Activated CD8-positive, alpha-beta T cell treated with anti-CD3 and anti-CD28 coated beads, Interleukin-2, amount 10 ng/mL, durations not matched to agents 7 days and 5 days (primary cell): ENCODE measurements at regions of chr6 and their contacts with region 1.

Region 1: DNA sequence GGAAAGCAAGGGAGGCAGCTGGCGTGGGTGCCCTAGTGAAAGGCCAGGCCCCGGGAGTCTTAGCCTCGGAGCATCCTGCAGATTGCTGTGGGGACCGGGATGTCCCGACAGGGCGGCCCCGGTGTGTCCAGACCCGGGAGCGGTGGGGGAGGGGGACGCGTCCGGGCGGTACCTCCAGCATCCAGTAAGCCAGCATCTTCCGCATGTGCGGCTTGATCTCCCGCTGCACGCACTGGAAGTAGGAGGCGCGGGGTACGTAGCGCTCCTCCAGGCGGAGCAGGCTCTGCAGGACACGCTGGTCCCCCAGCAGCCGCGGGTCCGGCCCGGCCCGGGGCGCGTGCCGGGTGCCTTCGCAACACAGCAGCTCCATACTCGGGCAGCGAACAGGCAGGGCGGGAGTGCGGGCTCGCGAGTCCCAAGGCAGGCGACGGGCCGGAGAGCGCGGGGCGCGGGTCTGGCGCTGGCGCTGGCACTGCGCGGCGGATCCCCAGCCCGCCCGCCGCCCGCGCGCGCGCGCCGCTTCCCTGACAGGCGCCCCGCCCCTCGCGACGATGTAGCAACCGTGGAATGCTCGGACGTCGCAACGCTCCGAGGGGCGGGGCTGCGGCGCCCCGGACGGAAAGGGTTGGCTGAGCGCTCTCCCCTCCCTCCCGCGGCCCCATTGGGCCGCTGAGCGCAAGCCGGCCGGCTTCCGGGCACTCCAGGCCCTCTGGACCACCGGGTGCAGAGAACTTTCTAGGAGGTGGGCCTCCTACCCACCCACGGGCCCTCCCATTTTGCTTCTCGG is at the start of gene CCND3:
- DNase-seq: peak; percentile 93
- ATAC-seq: peak; percentile 80
- H3K4me3 Mint-ChIP-seq: peak within 1 kb of the TSS; percentile 99
- H3K27ac Mint-ChIP-seq: peak within 1 kb of the TSS; percentile 97
- H3K4me1 Mint-ChIP-seq: peaks cover 58% of the 10 kb centered on the region
- H3K27me3 Mint-ChIP-seq: no peaks in the 10 kb centered on the region
- total RNA-seq, gene CCND3: 441 to 462 TPM

Region 2: DNA sequence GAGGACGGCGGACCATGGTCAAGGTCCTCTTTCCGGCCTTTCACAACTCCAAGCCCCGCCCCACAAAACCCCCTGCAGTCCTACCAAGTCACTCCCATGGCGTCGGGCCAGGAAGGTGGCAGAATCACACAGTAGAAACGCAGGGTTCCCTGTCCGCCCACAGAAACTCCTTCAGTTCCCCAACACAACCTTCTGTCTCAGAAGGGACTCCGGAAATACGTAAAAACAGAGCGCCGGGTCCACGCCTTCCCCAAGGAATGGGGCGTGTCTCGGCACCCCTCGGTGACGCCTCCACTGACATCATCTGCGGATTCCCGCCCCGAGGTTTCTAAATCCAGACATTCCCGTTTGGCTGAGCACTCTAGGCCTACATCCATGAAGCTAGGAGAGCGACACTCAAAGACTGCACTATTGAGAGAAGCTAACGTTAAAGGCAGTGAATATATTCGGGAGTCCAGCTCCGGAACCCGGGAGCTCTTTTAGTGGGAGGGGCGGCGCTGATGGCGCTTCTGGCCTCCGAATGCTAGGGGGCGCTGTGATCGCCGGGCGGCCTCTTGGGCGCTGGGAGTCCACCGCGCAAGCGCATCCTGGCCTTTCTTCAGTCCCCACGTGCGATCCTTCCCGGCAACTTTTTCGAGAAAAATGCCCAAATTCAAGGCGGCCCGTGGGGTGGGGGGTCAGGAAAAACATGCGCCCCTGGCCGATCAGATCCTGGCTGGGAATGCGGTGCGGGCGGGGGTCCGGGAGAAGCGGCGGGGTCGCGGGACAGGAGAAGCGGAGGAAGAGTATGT is 20.4 kb before region 1 on chr6 and contains the starts of genes BYSL and MED20:
- CTCF ChIA-PET with region 1: interaction called, 193 read pairs
- POLR2A ChIA-PET with region 1: interaction called, 99 read pairs
- DNase-seq: peak; percentile 95
- ATAC-seq: peak; percentile 90
- H3K4me3 Mint-ChIP-seq: peak within 1 kb of the TSS; percentile 98
- H3K27ac Mint-ChIP-seq: peak within 1 kb of the TSS; percentile 98
- H3K4me1 Mint-ChIP-seq: peaks cover 52% of the 10 kb centered on the region
- H3K27me3 Mint-ChIP-seq: no peaks in the 10 kb centered on the region
- total RNA-seq, gene BYSL: 39.4 to 43.1 TPM
- total RNA-seq, gene MED20: 20.6 to 22.3 TPM

Region 3: GRCh38 chr6:41929924-41930323 is 11.5 kb before region 1 on chr6:
- CTCF ChIA-PET with region 1: interaction called, 193 read pairs
- POLR2A ChIA-PET with region 1: interaction called, 99 read pairs
- DNase-seq: no peak
- ATAC-seq: no peak
- H3K4me3 Mint-ChIP-seq: no peak overlapping the region
- H3K27ac Mint-ChIP-seq: peak overlapping the region; percentile 60
- H3K4me1 Mint-ChIP-seq: peaks cover 40% of the 10 kb centered on the region
- H3K27me3 Mint-ChIP-seq: no peaks in the 10 kb centered on the region

Region 4: GRCh38 chr6:41967312-41968287 is 26.1 kb after region 1 on chr6:
- CTCF ChIA-PET with region 1: interaction called, 10 read pairs
- POLR2A ChIA-PET with region 1: interaction called, 8 read pairs
- DNase-seq: no peak
- ATAC-seq: no peak
- H3K4me3 Mint-ChIP-seq: no peak overlapping the region
- H3K27ac Mint-ChIP-seq: peak overlapping the region; percentile 8
- H3K4me1 Mint-ChIP-seq: peaks cover 56% of the 10 kb centered on the region
- H3K27me3 Mint-ChIP-seq: no peaks in the 10 kb centered on the region

Region 5: DNA sequence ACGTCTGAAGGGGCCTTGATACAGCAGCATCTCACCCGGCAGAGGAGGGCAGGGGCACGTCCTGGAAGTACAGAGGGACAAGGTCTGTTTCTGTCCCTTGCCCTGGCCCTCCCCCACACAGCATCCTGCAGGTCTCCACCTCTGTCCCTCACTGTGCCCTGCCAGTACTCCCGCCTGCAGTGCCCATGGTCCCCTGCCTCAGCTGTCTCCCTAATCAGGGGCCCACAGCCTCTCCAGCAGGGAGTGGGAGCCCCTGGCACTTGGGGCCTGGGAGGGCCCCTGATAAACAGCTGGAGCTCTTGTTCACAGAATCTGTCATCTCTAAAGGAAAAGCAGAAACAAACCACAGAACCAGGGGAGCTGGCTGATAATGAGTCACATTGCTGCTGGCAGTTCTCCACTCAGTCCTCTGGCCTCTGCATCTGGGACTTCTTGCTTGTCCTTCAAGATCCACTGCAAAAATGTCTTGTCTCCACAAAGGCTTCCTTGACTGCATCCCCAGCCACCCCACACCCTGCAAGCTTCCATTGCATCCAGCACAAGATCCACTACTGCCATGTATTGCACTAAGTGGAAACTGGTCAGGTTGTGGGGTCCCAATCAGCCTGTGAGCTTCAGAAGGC is 75.7 kb after region 1 on chr6:
- CTCF ChIA-PET with region 1: interaction called, 7 read pairs
- POLR2A ChIA-PET with region 1: interaction called, 17 read pairs
- DNase-seq: peak; percentile 62
- ATAC-seq: peak; percentile 73
- H3K4me3 Mint-ChIP-seq: peak overlapping the region; percentile 50
- H3K27ac Mint-ChIP-seq: peak overlapping the region; percentile 93
- H3K4me1 Mint-ChIP-seq: peaks cover 78% of the 10 kb centered on the region
- H3K27me3 Mint-ChIP-seq: no peaks in the 10 kb centered on the region

Region 6: DNA sequence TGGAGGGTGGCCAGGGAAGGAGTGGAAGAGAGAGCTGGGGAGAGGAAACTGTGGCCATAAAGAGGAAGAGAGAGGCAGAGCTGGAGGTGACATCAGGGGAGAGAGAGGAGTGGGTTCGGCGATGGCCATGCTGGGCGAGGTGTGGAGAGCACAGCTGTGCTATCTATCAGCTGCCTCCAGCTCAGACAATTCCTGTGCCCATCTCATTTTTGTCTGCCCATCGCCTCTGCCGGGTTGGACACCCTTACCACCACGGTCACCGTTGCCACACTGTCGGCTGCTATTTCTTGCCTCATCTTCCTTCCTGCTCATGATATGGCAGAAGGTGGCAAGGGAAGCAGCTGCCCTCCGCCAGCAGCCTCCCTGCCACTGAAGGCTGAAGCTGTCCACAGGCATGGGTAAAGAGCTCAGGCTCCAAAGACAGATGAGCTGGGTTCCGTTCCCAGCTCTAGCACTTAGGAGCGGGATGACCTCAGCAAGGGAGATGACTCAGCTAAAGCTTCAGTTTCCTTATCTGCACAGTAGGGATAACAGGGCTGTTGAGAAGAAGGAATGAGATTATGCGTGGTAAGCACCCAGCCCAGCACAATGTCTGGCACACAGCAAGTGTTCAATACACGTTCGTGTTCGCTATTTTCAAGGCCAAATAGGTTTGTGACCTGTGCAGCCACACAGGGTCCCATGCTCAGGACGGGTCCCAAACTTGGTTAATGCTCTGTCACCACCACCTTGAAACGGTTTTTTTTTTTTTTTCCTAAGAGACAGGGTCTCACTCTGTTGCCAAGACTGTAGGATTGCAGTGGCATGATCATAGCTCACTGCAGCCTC is 87.0 kb after region 1 on chr6:
- CTCF ChIA-PET with region 1: interaction called, 8 read pairs
- POLR2A ChIA-PET with region 1: interaction called, 83 read pairs
- DNase-seq: no peak
- ATAC-seq: peak; percentile 29
- H3K4me3 Mint-ChIP-seq: peak overlapping the region; percentile 63
- H3K27ac Mint-ChIP-seq: peak overlapping the region; percentile 97
- H3K4me1 Mint-ChIP-seq: peaks cover 90% of the 10 kb centered on the region
- H3K27me3 Mint-ChIP-seq: no peaks in the 10 kb centered on the region

Region 7: GRCh38 chr6:42050266-42051032 is 109.0 kb after region 1 on chr6 and contains the start of gene TAF8:
- CTCF ChIA-PET with region 1: interaction called, 451 read pairs
- POLR2A ChIA-PET with region 1: interaction called, 372 read pairs
- DNase-seq: peak; percentile 95
- ATAC-seq: peak; percentile 81
- H3K4me3 Mint-ChIP-seq: peak within 1 kb of the TSS; percentile 95
- H3K27ac Mint-ChIP-seq: peak within 1 kb of the TSS; percentile 99
- H3K4me1 Mint-ChIP-seq: peaks cover 67% of the 10 kb centered on the region
- H3K27me3 Mint-ChIP-seq: no peaks in the 10 kb centered on the region
- total RNA-seq, gene TAF8: 44.1 TPM